Activated CD4-positive, alpha-beta T cell treated with anti-CD3 and anti-CD28 coated beads for 36 hours (primary cell): ENCODE measurements at regions of chr10 and their contacts with region 1.

Region 1: GRCh38 chr10:84328418-84329195 is at the start of gene CCSER2:
- DNase-seq: peak; percentile 98
- ATAC-seq: peak; percentile 74
- H3K4me3 Mint-ChIP-seq: peak within 1 kb of the TSS; percentile 93
- H3K27ac Mint-ChIP-seq: peak within 1 kb of the TSS; percentile 98
- H3K4me1 Mint-ChIP-seq: peaks cover 28% of the 10 kb centered on the region
- H3K27me3 Mint-ChIP-seq: no peaks in the 10 kb centered on the region
- total RNA-seq, gene CCSER2: 61.2 to 85.2 TPM

Region 2: GRCh38 chr10:84308481-84309304 is 19.9 kb before region 1 on chr10:
- CTCF ChIA-PET with region 1: interaction called, 4 read pairs
- POLR2A ChIA-PET with region 1: interaction called, 14 read pairs
- intact Hi-C with region 1: loop called (anchors 1 kb)
- DNase-seq: peak; percentile 75
- ATAC-seq: peak; percentile 67
- H3K4me3 Mint-ChIP-seq: peak overlapping the region; percentile 47
- H3K27ac Mint-ChIP-seq: peak overlapping the region; percentile 90
- H3K4me1 Mint-ChIP-seq: peaks cover 37% of the 10 kb centered on the region
- H3K27me3 Mint-ChIP-seq: no peaks in the 10 kb centered on the region

Region 3: GRCh38 chr10:84798312-84798711 is 469.7 kb after region 1 on chr10:
- CTCF ChIA-PET with region 1: no interaction called
- POLR2A ChIA-PET with region 1: no interaction called
- intact Hi-C with region 1: no loop called
- DNase-seq: no peak
- ATAC-seq: no peak
- H3K4me3 Mint-ChIP-seq: no peak overlapping the region
- H3K27ac Mint-ChIP-seq: no peak overlapping the region
- H3K4me1 Mint-ChIP-seq: no peaks in the 10 kb centered on the region
- H3K27me3 Mint-ChIP-seq: peaks cover 7% of the 10 kb centered on the region